AG04450 (cell line): ENCODE measurements at regions of chr5 and their contacts with region 1.

Region 1: DNA sequence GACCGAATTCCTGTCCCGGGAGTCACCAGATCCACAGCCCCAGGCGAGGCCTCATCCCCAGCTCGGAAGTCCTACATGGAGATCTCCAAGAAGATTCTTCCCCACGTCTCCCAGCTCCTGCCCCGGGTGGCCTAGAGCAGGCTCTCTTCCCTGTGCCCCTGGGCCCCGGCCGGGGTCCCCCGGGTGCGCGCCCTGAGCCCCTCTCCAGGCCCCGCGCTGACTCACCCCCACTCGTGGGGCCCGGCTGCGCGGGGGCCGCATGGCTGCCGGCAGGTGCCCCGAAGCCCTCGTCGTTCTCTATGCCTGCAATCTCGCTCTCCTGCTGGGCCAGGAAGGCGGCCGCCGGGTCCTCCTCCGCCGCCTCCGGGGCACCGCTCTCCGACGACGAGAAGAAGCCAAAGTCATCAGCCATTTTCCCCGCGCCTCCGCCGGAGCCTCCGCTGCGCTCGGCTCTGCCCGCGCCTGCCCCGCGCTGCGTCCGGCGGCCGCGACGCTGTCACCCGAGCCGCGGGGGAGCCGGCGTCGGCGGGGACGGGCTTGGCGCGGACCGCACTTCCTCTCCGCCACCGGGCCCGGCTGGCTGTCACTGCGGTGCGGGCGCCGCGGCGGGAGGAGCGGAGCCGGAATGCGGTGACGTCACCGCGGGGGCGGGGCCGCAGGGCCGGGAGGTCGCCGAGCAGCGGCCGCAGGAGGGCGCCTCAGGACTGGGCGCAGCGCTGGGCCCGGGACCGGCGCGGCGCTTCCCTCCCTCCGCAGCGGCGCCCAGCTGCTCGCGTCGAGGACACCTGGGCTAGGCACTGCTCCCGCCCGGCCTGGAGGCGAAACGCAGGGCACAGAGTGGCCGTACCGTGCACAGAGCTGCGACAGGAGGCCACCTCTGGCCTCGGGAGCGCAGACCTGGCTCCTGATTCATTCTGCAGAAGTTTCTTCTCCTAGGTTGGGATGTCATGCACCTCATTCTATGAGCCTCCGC is at the start of gene CLTB:
- DNase-seq: no peak
- H3K4me3 ChIP-seq: peak within 1 kb of the TSS; percentile 76
- H3K27ac ChIP-seq: peak within 1 kb of the TSS; percentile 39
- H3K27me3 ChIP-seq: no peaks in the 10 kb centered on the region
- CTCF ChIP-seq: peak; percentile 43
- polyA plus RNA-seq, gene CLTB: 66.2 and 67.3 TPM in 2 replicates

Region 2: GRCh38 chr5:176319827-176320554 is 96.2 kb before region 1 on chr5:
- CTCF ChIA-PET with region 1: no interaction called
- POLR2A ChIA-PET with region 1: no interaction called
- DNase-seq: no peak
- H3K4me3 ChIP-seq: no peak overlapping the region
- H3K27ac ChIP-seq: no peak overlapping the region
- H3K27me3 ChIP-seq: no peaks in the 10 kb centered on the region
- CTCF ChIP-seq: 0 out of 2 replicates have a peak, but pooled peaks have one; percentile 31

Region 3: DNA sequence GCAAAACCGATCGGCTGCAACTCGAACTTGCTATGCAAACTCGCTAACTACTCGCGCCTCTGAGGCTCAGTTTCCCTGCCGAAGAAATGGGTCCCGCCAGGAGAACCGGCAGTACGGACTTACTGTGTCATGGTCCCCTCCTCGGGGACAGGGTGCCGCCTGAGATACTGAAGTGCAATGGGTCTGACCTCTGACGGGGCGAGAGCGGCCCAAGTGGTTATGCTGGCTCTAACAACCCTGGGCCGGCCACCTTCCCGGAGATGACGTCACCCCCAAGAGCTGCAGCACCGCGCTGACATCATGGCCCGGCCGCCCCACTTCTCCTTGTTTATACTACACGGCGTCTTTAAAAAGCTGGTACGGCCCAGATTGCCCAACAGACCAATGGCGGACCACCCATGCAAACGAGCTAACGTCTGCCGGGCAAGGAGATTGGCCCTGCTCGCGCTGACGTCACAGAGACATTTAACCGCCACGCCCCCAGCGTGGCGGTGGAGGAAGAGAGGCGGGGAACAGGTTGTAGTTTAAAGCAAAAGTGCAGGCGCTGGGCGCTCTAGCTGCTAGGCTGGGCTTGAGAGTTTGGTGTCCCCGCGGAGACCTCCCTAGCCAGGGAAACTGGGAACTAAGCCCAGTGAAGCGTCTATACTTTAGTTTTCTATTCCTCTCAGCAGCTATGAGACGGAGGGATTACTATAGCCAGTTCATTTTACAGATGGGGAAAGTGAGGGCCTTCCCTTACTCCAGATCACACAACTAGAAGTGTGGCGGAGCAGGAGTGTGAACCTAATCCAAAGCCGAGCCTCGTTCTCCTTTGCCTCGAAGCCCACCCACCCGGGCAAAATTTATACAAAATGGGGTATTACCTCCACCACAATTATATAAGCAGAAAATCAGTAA is 121.6 kb after region 1 on chr5:
- CTCF ChIA-PET with region 1: interaction called, 5 read pairs
- POLR2A ChIA-PET with region 1: interaction called, 15 read pairs
- DNase-seq: peak; percentile 99
- H3K4me3 ChIP-seq: peak overlapping the region; percentile 99
- H3K27ac ChIP-seq: peak overlapping the region; percentile 94
- H3K27me3 ChIP-seq: no peaks in the 10 kb centered on the region
- CTCF ChIP-seq: no peak

Region 4: GRCh38 chr5:176559683-176560082 is 143.4 kb after region 1 on chr5:
- CTCF ChIA-PET with region 1: no interaction called
- POLR2A ChIA-PET with region 1: no interaction called
- DNase-seq: no peak
- H3K4me3 ChIP-seq: no peak overlapping the region
- H3K27ac ChIP-seq: no peak overlapping the region
- H3K27me3 ChIP-seq: peaks cover 4% of the 10 kb centered on the region
- CTCF ChIP-seq: no peak